Head of caudate nucleus (tissue), 42 donors: ENCODE measurements at regions of chr15 and their contacts with region 1.

Region 1: GRCh38 chr15:43791993-43792760 is at the start of gene SERF2:
- DNase-seq: peak; percentile 100

Region 2: GRCh38 chr15:43749690-43750345 is 42.4 kb before region 1 on chr15:
- intact Hi-C with region 1: loop called (anchors 10 kb)
- DNase-seq: peak in 2 of 42 donors; percentile 12 to 40

Region 3: DNA sequence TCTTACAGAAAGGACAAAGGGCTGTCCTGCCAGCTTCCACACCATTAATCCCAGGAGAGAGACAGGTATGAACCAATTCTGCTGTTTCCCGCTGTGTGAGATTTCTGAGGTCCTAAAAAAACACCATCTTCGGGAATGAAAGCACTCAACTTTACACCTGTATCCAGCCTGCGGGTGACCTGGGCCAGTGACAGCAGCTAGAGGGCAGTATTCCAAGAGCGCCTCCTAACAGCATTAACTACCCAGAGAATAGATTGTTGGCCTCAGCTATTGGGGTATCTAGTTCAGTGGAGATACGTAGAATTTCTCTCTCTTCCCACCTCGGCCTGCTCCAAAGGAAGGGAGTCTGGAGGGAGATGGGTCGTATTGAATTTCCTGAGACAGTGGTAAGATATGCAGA is 89.8 kb after region 1 on chr15:
- intact Hi-C with region 1: no loop called
- DNase-seq: peak in 7 of 42 donors; percentile 13 to 64 (median 22)

Region 4: DNA sequence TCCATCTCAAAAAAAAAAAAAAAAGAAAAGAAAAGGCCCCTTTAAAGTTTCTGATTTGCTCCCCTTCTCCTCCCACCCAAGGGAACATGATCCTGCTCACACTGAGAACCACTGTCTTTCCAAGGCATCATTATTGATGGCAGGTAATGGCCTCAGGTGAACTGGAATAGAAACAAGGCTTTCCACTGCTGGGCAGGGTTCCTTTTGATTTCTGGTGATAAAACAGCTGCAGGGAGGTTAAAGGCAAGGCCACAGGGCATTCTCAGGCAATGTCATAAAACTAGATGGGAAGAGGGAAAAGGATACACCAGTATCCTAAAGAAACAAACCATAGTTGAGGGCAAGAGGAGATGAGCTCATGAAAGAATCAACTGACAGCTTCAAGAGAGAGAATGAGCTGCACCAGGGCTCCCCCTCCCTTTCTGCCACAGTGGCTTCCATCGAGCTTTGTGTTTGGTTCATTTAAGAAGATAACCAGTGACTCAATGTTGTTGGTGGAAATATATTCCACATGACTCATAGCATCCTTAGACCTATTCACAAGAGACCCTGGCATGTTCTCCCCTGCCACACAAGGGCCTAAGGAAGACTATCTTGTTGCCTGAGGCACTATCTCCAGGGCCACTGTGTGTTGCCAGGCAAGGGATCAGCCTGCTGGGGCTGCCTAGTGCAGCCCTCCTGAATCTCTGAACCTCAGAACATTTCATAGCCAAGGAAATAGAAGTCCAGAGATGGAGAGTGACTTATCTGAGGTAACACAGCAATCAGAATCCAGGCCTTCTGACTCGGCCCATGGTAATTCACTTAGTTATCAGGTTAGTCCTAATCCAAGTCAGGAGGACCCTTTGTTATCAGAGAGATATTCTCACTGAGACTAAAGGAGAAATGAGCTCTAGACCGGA is 121.1 kb after region 1 on chr15:
- intact Hi-C with region 1: no loop called
- DNase-seq: peak in 38 of 42 donors; percentile 16 to 86 (median 54)